AG04449 (cell line): ENCODE measurements at regions of chr16 and their contacts with region 1.

Region 1: DNA sequence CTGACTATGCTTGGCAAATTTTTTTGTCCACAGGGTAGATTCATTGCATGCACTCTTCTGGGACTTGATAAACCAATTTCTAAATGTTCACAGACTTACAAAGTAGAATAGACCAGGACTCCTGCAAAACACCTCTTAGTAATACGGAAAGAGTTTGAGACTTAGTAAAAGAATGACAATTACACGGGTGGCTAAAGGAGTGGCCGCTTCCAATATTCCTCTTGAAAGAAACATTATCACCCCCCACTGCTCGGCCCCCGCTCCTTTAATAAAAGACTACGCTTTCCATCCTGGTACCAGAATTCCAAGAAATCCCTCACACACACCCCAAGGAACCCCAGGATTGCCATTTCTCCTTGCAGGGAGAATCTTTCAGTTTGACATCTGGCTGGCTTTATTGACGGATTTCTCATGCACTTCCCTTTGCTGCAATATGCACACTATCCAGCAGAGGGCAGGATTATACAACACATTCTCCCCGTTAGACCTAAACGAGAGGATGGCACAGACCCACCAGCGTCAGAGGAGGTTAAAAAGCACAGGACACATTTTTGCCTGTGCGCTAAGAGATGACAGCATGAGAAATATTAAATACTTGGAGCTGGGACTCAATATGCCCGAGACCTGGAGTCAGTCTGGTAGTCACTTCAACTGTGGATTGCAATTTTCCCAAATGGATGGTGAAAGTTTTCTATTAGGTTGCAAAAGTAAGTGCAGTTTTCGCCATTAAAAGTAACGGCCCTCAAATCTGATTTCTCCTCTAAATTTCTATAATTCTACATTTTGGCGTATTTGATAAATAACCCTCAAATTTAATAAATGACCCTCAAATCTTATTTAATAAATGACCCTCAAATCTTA is 46.6 kb upstream of the NUDT7 start:
- DNase-seq: no peak
- H3K4me3 ChIP-seq: no peak overlapping the region; the same call in 1 of the 2 replicates
- CTCF ChIP-seq: peak; percentile 72

Region 2: GRCh38 chr16:77617990-77618389 is 57.7 kb before region 1 on chr16:
- CTCF ChIA-PET with region 1: no interaction called
- POLR2A ChIA-PET with region 1: no interaction called
- DNase-seq: no peak
- H3K4me3 ChIP-seq: no peak overlapping the region
- CTCF ChIP-seq: no peak

Region 3: DNA sequence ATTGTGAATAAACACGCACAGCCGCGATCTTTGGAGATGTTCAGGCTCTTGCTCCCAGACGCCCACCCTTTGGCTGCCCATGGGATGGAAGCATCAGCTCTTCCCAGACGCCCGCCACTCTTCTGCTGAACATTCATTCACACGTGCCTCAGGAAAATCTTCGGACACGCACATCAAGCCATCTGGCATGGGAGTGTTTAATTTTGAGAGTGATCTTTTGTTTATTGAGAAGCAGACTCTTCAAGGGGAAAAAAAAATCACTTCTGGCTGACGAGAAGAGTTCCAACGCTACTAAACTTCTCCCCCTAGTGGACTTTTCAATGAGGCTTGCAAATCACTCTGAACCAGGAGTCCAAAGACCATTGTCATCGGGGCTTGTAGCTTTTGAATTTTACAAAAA is 15.4 kb before region 1 on chr16:
- CTCF ChIA-PET with region 1: interaction called, 13 read pairs
- POLR2A ChIA-PET with region 1: no interaction called
- DNase-seq: no peak
- H3K4me3 ChIP-seq: no peak overlapping the region
- CTCF ChIP-seq: peak; percentile 60